PC-3 (cell line): ENCODE measurements at regions of chr5 and their contacts with region 1.

Region 1: GRCh38 chr5:154214371-154215106 is 24.0 kb downstream of the GALNT10 start:
- DNase-seq: peak; percentile 77
- ATAC-seq: peak; percentile 91
- H3K4me3 ChIP-seq: peak overlapping the region; percentile 35; the same call in 1 of the 2 replicates
- H3K27ac ChIP-seq: peak overlapping the region; percentile 83
- H3K4me1 ChIP-seq: peaks cover 26% of the 10 kb centered on the region
- H3K27me3 ChIP-seq: no peaks in the 10 kb centered on the region
- CTCF ChIP-seq: no peak

Region 2: DNA sequence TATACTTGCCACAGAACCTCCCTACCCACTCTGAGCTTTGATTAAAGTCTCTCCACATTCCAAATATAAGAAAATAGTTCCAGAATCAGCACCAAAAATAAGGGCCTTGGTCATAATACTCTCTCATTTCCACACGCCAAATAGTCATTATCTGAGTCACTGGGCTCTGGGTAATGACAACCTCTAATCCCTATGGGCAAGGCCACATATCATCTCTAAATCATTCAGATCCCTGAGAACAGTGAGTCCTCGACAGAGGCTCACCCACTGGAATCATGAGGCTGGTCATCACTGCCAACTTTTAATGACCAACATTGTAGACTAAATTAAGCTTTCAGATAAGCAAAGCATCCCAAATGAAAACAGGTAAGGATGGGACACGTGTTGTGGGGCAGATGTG is 203.9 kb before region 1 on chr5:
- CTCF ChIA-PET with region 1: no interaction called
- POLR2A ChIA-PET with region 1: no interaction called
- intact Hi-C with region 1: no loop called
- DNase-seq: no peak
- ATAC-seq: no peak
- H3K4me3 ChIP-seq: no peak overlapping the region
- H3K27ac ChIP-seq: no peak overlapping the region
- H3K4me1 ChIP-seq: no peaks in the 10 kb centered on the region
- H3K27me3 ChIP-seq: no peaks in the 10 kb centered on the region
- CTCF ChIP-seq: no peak

Region 3: DNA sequence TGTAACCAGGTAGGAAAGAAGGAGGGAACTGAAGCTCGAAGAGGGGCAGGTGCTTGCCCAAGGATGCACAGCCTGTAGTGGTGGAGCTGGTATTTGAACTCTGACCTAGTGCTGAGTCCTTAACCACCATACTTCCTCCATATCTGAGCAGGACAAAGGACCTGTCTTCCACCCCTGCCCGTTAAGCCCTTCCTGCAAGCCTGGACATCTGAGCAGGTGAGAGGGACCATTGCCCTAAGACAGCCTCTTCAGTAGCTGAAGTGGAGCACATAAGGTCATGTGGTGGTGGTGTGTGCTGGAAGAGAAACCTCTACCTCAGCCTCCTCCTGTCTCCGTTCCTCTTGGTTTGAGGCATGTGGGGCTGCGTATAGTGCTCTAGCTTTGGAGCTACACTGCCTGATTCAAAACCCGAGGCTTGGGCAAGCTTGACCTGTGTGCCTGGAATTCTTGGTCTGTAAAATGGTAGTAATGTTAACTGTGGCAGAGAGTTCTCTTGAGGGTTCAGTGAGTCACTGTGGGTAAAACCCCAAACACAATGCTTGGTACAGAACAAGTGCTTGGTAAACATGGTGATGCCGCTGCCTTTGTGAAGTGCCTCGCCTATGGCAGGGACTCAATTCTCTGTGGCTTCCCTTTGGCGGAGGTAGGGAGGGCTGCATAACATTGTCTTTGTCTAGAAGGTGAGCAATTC is 16.6 kb before region 1 on chr5:
- CTCF ChIA-PET with region 1: no interaction called
- POLR2A ChIA-PET with region 1: no interaction called
- intact Hi-C with region 1: loop called (anchors 2 kb)
- DNase-seq: peak; percentile 94
- ATAC-seq: peak; percentile 70
- H3K4me3 ChIP-seq: peak overlapping the region; percentile 47; the same call in 1 of the 2 replicates
- H3K27ac ChIP-seq: peak overlapping the region; percentile 99
- H3K4me1 ChIP-seq: peaks cover 66% of the 10 kb centered on the region
- H3K27me3 ChIP-seq: no peaks in the 10 kb centered on the region
- CTCF ChIP-seq: no peak

Region 4: GRCh38 chr5:154505611-154506010 is 291.1 kb after region 1 on chr5:
- CTCF ChIA-PET with region 1: no interaction called
- POLR2A ChIA-PET with region 1: no interaction called
- intact Hi-C with region 1: no loop called
- DNase-seq: no peak
- ATAC-seq: no peak
- H3K4me3 ChIP-seq: no peak overlapping the region
- H3K27ac ChIP-seq: no peak overlapping the region
- H3K4me1 ChIP-seq: no peaks in the 10 kb centered on the region
- H3K27me3 ChIP-seq: no peaks in the 10 kb centered on the region
- CTCF ChIP-seq: no peak